Gastrocnemius medialis (tissue), 4 donors: ENCODE measurements at regions of chr20 and their contacts with region 1.

Region 1: DNA sequence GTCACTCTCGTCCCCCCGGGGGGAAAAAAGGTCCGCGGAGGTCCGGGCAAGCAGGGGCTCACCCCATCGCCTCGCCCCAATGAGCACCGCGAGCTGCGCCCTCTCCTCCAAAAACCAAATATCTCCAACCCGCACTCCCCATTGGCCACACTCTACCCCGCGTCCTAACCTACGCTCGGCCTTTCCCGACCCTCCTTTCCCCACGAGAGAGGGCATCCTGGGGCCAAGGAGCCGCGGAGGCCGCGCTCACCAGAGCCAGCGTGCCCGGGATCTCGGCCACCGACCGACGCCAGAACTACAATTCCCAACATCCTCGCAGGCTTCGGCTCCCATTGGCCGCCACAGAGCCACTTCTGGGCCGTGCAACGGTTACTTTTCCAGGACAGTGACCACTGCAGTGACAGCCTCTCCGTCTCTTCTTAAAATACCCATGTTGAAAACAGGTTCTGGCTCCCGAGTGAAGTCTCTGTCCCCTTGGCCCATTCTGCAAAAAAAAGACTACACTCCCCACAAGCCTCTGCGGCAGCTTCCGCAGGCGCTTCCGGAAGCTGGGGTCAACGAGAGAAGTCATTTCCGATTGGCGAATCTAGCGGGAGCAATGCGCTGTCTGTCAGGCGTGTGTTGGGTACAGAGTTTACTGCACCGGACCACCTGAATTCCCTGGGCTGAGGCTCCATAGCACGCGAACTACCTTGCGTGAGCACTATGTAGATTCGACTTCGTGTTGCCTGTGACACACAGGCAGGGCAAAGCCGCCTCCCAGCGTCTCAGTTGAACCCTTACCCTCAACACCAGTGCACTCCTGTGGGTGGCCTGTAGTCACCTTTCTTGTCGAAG is at the start of gene ZNF343:
- DNase-seq: peak; percentile 75 to 76
- ATAC-seq: peak; percentile 100
- H3K4me3 ChIP-seq: peak within 1 kb of the TSS; percentile 75 to 90 (median 82)
- H3K27ac ChIP-seq: peak within 1 kb of the TSS; percentile 90 to 98 (median 92)
- H3K4me1 ChIP-seq: peaks cover 14 to 17% of the 10 kb centered on the region in 2 donors
- H3K27me3 ChIP-seq: peaks cover 0 to 4% (median 0%) of the 10 kb centered on the region in 3 donors
- CTCF ChIP-seq: no peak
- POLR2A ChIP-seq: peak; percentile 35 to 52
- total RNA-seq, gene ZNF343: 6.1 to 14.3 (median 12.7) TPM

Region 2: GRCh38 chr20:2470423-2471193 is 38.2 kb before region 1 on chr20 and contains the start of gene SNRPB:
- in situ Hi-C with region 1: no loop called
- intact Hi-C with region 1: loop called (anchors 1 kb)
- DNase-seq: peak; percentile 96 to 97
- ATAC-seq: peak; percentile 98 to 99
- H3K4me3 ChIP-seq: peak within 1 kb of the TSS; percentile 77 to 95 (median 84)
- H3K27ac ChIP-seq: peak within 1 kb of the TSS; percentile 86 to 95 (median 88)
- H3K4me1 ChIP-seq: peaks cover 12 to 15% of the 10 kb centered on the region in 2 donors
- H3K27me3 ChIP-seq: no peaks in the 10 kb centered on the region
- CTCF ChIP-seq: no peak
- POLR2A ChIP-seq: peak; percentile 86 to 96
- total RNA-seq, gene SNRPB: 131 to 209 (median 190) TPM